ENCODE measurements at regions of chr3 and their contacts with region 1.

Region 1: GRCh38 chr3:171640520-171641412 is 169.5 kb downstream of the PLD1 start:
- DNase-seq: peak in 2 of 5 donors; percentile 32 to 54
- ATAC-seq: peak in 3 of 4 donors; percentile 76 to 79 (median 77)
- H3K4me3 ChIP-seq: no peak overlapping the region
- H3K27ac ChIP-seq: peak overlapping the region in 11 of 12 donors; percentile 2 to 67 (median 48)
- H3K4me1 ChIP-seq: peaks cover 0 to 39% (median 13%) of the 10 kb centered on the region in 12 donors
- H3K27me3 ChIP-seq: no peaks in the 10 kb centered on the region
- CTCF ChIP-seq: peak in 1 of 12 donors; percentile 16
- POLR2A ChIP-seq: no peak

Region 2: GRCh38 chr3:171753665-171754408 is 113.1 kb after region 1 on chr3:
- intact Hi-C with region 1: loop called in 1 of 10 experiments (anchors 5 kb)
- DNase-seq: no peak
- ATAC-seq: peak in 2 of 4 donors; percentile 37 to 38
- H3K4me3 ChIP-seq: no peak overlapping the region
- H3K27ac ChIP-seq: peak overlapping the region in 9 of 12 donors; percentile 11 to 62 (median 44)
- H3K4me1 ChIP-seq: peaks cover 0 to 78% (median 54%) of the 10 kb centered on the region in 12 donors
- H3K27me3 ChIP-seq: no peaks in the 10 kb centered on the region
- CTCF ChIP-seq: no peak
- POLR2A ChIP-seq: no peak

Region 3: GRCh38 chr3:172018364-172018763 is 377.6 kb after region 1 on chr3:
- intact Hi-C with region 1: loop called in 1 of 10 experiments (anchors 5 kb)
- DNase-seq: no peak
- ATAC-seq: no peak
- H3K4me3 ChIP-seq: no peak overlapping the region
- H3K27ac ChIP-seq: no peak overlapping the region
- H3K4me1 ChIP-seq: peaks cover 0 to 3% (median 0%) of the 10 kb centered on the region in 12 donors
- H3K27me3 ChIP-seq: no peaks in the 10 kb centered on the region
- CTCF ChIP-seq: no peak
- POLR2A ChIP-seq: no peak

Measured in heart left ventricle (tissue), 16 donors.